Body of pancreas (tissue), 4 donors: ENCODE measurements at regions of chr16 and their contacts with region 1.

Region 1: DNA sequence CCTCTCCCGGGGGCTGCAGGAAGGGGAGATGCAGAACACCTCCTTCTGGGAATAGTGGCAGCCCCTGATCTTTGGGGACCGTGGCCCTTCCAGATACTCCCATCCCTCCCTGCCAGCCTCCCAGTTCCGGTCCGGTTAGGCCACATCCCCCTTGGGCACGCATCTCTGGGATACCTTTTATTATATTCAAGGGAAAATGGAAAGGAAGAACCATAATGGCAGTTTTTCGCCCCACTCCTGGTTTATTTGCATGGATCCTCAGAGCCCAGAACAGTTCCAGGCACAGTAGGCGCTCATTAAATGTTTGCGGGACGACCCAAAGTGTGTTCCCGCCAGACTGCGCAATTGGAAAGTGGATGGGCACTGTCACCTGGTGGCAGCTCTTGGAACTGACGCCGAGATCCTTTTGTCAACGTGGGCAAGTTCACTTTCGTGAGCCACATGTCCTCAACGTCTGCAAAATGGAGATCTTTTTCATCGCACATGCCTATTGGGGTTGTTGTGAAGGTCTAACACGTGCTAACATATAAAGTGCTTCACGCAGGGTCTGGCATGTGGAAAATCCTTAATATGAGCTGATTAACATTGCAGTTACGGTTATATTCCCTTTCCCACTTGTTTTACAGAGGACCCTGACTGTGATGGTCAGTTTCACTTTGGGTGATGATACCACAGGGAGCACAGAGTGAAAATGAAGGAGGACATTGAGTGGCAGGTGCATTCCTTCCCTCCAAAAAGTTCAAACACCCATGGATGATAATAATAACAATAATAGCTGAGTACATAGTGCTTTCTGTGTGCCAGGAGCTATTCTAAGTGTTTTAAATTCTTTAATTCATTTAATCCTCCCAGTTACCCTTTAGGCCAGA is 1.7 kb upstream of the GPRC5B start:
- DNase-seq: peak; percentile 78 to 86 (median 82)
- ATAC-seq: peak; percentile 57
- H3K4me3 ChIP-seq: no peak overlapping the region
- H3K27ac ChIP-seq: no peak overlapping the region
- H3K4me1 ChIP-seq: peaks cover 22% of the 10 kb centered on the region
- H3K27me3 ChIP-seq: no peaks in the 10 kb centered on the region
- CTCF ChIP-seq: peak; percentile 99 to 100 (median 99)
- POLR2A ChIP-seq: no peak

Region 2: DNA sequence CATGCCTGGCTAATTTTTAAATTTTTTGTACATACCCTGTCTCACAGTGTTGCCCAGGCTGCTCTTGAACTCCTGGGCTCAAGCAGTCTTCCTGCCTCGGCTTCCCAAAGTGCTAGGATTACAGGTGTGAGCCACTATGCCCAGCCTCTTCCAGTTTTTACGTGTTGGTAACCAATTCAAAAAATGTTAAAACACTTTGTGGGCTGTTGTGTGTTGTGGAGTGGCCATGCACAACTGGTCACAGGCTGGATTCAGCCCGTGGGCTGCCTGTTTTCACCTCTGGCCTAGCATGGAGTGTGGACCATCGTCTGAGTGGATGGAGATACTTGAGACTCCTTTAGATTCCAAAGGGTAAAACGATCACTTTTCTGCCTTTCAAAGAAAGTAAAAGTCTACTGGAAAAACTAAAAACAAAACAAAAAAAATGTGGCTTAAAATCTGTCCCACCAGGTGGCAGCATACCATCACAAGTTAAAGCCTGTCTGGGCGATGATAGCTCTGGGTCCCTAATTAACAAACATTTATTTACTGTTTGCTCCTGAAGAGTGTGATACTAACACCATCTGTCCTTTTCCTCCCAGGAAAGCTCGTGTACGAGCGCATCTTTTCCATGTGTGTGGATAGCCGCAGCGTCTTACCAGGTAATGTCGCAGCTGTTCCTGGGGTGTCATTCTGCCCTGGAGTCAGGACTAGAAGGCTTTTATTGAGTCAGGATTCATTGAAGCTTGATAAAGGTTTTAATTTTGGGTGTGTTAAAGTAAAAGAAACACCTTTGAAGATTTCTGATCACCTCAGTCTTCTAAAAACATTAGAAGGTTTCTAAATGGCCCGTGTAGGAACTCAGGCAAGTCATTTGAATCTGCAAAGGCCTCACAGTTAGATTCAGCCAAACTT is 285.0 kb before region 1 on chr16:
- intact Hi-C with region 1: loop called (anchors 5 kb)
- DNase-seq: peak; percentile 25 to 52 (median 42)
- ATAC-seq: no peak
- H3K4me3 ChIP-seq: no peak overlapping the region
- H3K27ac ChIP-seq: no peak overlapping the region
- H3K4me1 ChIP-seq: no peaks in the 10 kb centered on the region
- H3K27me3 ChIP-seq: no peaks in the 10 kb centered on the region
- CTCF ChIP-seq: peak; percentile 28 to 79 (median 72)
- POLR2A ChIP-seq: no peak

Region 3: DNA sequence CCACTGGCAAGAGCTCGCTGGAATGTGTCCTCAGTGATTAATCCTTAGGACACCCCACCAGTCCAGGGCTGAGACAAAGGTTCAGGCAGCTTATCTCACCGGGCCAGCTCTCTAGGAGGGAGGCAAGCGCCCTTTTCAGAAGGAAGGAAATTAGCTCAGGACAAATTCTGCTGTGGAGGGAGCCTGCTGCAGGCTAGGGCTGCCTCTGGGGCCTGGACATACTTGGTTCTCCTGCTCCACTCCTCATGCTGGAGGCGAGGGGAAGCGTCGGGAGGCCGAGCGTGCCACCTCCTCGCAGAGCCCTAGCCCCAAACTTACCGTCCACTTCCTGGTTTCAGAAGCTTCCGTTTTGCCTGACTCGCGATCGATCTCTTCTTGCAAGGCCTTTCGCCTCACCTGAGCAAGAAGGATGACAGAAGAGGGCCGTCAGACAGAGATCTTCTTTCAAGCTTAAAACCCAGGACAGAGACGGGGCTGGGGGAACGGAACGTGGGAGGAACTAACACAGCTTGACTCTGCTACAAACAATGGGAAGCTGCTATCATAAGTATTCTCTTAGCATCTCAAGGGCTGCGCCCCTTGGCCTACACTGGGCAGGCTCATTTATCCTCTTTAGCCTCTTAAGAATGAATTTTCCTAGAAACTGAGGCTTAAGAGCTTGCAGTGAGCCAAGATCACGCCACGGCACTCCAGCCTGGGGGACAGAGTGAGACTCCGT is 176.0 kb before region 1 on chr16:
- intact Hi-C with region 1: loop called (anchors 5 kb)
- DNase-seq: no peak
- ATAC-seq: no peak
- H3K4me3 ChIP-seq: no peak overlapping the region
- H3K27ac ChIP-seq: peak overlapping the region in 1 of 4 donors; percentile 64
- H3K4me1 ChIP-seq: peaks cover 9% of the 10 kb centered on the region
- H3K27me3 ChIP-seq: no peaks in the 10 kb centered on the region
- CTCF ChIP-seq: no peak
- POLR2A ChIP-seq: no peak

Region 4: DNA sequence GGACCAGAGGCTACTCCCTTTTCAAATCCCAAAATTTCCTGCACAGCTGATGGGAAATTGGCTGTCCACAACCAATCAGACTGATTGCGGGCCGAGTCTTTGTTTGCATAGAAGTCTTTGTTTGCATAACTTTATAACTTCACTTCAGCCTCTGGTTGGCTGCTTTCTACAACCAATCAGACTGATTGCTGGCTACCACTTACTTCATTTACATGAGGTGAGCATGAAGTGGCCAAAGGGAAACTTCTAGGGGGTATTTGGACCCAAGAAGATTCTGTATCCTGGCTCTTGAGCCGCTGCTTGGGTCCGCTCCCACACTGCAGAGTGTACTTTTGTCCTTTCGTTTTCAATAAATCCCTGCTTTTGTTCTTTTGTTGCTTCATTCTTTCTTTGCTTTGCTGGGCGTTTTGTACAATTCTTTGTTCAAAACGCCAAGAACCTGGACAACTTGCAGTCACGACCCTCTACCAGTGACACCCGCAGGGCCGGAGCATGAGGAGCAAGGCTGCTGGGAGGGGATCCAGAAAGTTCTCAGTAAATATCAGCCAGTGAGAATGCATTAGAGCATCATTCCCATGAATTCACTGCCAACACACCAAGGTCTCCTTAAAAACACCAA is 100.7 kb before region 1 on chr16:
- intact Hi-C with region 1: no loop called
- DNase-seq: no peak
- ATAC-seq: peak; percentile 30
- H3K4me3 ChIP-seq: no peak overlapping the region
- H3K27ac ChIP-seq: peak overlapping the region in 3 of 4 donors; percentile 31 to 69 (median 41)
- H3K4me1 ChIP-seq: peaks cover 11% of the 10 kb centered on the region
- H3K27me3 ChIP-seq: no peaks in the 10 kb centered on the region
- CTCF ChIP-seq: no peak
- POLR2A ChIP-seq: no peak

Region 5: DNA sequence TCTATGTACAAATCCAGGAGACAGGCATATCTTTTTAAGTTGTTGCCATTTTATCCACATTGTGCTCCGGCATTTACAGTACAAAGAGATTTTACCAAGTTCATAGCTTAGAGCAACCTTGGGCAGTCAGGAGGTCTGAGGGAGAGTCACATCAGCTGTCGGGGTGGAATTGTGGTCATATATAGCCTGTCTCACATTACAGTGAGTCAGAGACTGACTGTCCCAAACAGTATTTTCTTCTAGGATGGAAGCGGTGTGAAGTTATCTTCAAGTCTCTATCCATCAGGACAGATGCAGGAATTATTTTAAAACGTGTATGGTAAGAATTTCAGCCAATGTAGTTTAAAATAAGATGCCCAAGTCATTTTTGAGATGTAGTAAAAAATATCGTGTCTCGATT is 54.6 kb before region 1 on chr16:
- intact Hi-C with region 1: no loop called
- DNase-seq: no peak
- ATAC-seq: no peak
- H3K4me3 ChIP-seq: no peak overlapping the region
- H3K27ac ChIP-seq: no peak overlapping the region
- H3K4me1 ChIP-seq: peaks cover 10% of the 10 kb centered on the region
- H3K27me3 ChIP-seq: no peaks in the 10 kb centered on the region
- CTCF ChIP-seq: no peak
- POLR2A ChIP-seq: no peak

Region 6: DNA sequence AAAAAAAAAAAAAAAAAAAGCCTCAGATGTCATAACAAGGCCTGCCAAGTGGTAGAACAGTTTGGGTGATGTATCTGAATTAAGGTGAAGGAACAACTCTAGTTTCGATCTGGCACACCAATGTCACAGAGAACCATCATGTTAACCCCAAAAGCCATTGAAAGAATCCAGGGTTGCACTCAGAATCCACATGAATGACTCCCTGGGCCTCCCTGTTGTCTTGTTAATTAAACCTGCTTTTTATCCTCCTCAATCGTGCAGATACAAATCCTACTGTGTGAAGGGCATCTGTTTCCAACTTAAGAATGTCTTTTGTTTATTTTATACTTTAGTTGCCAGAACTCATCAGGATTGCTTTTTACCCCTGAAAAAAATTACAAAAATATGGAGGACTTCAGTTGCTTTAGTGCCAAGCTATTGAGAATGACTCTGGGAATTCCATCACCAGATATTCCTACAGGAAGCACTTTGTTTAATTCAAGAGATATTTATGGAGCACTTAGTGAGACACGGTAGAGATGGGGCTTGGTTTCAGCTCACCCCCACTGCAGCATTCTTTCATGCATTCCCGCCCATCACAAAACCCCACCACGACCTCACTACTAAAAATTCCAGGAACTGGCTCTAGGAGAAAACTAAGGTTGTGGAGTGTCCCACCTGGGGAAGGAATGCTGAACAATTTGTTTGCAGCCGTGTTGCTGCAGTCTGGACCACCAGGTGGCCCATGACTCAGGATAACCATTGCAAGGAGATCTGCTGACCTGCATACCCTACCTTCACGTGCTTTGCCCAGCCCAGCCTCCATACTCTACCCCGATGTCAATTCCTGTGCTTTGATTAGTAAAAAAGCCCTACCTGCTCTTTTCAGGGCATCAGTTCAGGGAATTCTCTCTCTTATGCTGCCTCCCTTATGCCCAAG is 62.1 kb after region 1 on chr16:
- intact Hi-C with region 1: no loop called
- DNase-seq: no peak
- ATAC-seq: no peak
- H3K4me3 ChIP-seq: no peak overlapping the region
- H3K27ac ChIP-seq: no peak overlapping the region
- H3K4me1 ChIP-seq: no peaks in the 10 kb centered on the region
- H3K27me3 ChIP-seq: no peaks in the 10 kb centered on the region
- CTCF ChIP-seq: peak in 1 of 7 experiments; percentile 3
- POLR2A ChIP-seq: no peak